Dorsolateral prefrontal cortex (tissue), 120 donors: ENCODE measurements at regions of chr22 and their contacts with region 1.

Region 1: GRCh38 chr22:34608540-34609115 is 457.3 kb upstream of the ISX start:
- DNase-seq: no peak
- H3K4me3 ChIP-seq: no peak overlapping the region
- H3K27ac ChIP-seq: no peak overlapping the region
- H3K27me3 ChIP-seq: peaks cover 0 to 22% (median 0%) of the 10 kb centered on the region in 45 donors
- CTCF ChIP-seq: no peak

Region 2: GRCh38 chr22:34587831-34588251 is 20.8 kb before region 1 on chr22:
- intact Hi-C with region 1: no loop called
- DNase-seq: no peak
- H3K4me3 ChIP-seq: no peak overlapping the region
- H3K27ac ChIP-seq: no peak overlapping the region
- H3K27me3 ChIP-seq: peaks cover 0 to 10% (median 0%) of the 10 kb centered on the region in 45 donors
- CTCF ChIP-seq: no peak

Region 3: DNA sequence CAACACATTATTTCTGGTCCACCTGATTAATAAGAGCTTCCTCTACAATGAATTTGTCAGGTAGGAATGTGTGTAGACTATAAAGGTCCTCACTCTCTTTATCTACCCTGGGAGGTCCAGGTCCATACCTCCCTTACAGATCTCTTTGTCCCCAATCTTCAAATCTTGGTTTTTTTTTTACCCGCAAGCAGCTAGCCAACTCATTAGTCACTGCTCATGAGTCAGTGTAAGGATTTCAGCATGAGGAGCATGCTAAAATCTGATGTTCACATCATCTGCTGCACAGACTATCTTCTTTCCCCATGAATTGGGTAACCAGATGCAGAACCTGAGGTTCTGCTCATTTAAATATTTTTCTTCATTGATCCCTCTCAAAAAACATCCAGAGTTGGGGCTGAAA is 60.4 kb after region 1 on chr22:
- intact Hi-C with region 1: loop called in 1 of 2 experiments (anchors 10 kb)
- DNase-seq: no peak
- H3K4me3 ChIP-seq: no peak overlapping the region
- H3K27ac ChIP-seq: peak overlapping the region in 2 of 59 donors; percentile 39 to 51
- H3K27me3 ChIP-seq: peaks cover 0 to 6% (median 0%) of the 10 kb centered on the region in 45 donors
- CTCF ChIP-seq: no peak

Region 4: GRCh38 chr22:34702279-34702678 is 93.7 kb after region 1 on chr22:
- intact Hi-C with region 1: no loop called
- DNase-seq: no peak
- H3K4me3 ChIP-seq: no peak overlapping the region
- H3K27ac ChIP-seq: no peak overlapping the region
- H3K27me3 ChIP-seq: peaks cover 0 to 25% (median under 1%) of the 10 kb centered on the region in 45 donors
- CTCF ChIP-seq: no peak